CD4-positive, alpha-beta T cell (primary cell): ENCODE measurements at regions of chr1 and their contacts with region 1.

Region 1: DNA sequence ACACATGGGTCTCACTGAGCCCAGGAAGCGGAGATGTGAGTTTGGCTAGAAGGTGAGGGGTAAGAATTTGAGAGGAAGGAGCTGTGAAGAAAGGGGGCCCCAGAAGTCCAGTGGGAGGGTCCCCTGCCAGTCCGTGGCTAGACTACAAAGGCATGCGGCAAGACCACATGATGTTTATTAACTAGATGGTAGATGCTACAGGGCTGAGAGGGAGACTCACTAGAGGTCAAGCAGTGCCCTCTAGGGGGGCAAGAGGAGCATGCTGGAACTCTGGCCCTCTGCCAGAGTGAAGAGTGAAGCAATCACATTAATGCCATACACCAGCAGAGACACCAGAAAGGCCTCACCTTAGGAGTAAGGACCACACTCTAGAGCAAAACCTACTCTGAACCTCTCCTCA is 12.2 kb downstream of the KIAA0319L start:
- DNase-seq: peak in 13 of 14 experiments; percentile 30 to 85 (median 54)
- ATAC-seq: peak; percentile 81
- H3K4me3 ChIP-seq: no peak overlapping the region
- H3K4me3 Mint-ChIP-seq: no peak overlapping the region
- H3K27ac ChIP-seq: no peak overlapping the region
- H3K27ac Mint-ChIP-seq: peak overlapping the region; percentile 8
- H3K4me1 ChIP-seq: peaks cover 26% of the 10 kb centered on the region
- H3K4me1 Mint-ChIP-seq: peaks cover 67% of the 10 kb centered on the region
- H3K27me3 ChIP-seq: no peaks in the 10 kb centered on the region
- H3K27me3 Mint-ChIP-seq: no peaks in the 10 kb centered on the region
- CTCF ChIP-seq: peak; percentile 63

Region 2: DNA sequence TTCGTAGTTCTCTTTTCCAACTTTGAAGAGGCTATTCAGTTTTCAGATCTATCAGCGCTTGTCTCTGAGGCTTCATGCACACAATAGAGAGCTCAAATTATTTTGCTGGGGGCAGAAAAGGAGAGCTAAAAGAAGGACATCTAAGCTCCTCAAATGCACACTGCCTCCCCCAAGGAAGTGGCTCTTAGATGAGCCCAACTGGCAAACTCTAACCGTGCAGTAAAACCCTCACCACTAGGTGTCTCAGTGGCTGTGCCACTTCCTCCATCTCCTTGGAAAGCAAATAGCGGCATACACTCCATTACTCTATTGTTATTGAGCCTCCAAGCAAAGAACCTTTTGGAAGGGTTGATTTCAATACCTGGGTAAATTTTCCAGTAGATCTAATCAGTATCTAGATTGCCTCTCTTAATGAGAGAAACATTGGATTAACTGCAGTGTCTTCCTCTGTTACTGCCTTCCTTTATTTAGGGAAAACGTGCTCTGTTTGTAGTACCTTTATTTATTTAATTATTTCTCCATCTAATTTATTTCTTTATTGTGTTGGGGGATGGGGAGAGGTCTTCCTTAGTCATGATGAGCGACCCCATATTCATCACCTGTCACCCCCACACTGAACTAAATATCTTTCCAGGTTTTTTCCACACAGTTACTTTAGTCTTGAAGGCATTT is 342.8 kb before region 1 on chr1:
- CTCF ChIA-PET with region 1: no interaction called
- POLR2A ChIA-PET with region 1: no interaction called
- intact Hi-C with region 1: loop called in 1 of 2 experiments (anchors 5 kb)
- DNase-seq: peak; percentile 49 to 87 (median 62)
- ATAC-seq: peak; percentile 100
- H3K4me3 ChIP-seq: no peak overlapping the region
- H3K4me3 Mint-ChIP-seq: no peak overlapping the region
- H3K27ac ChIP-seq: no peak overlapping the region
- H3K27ac Mint-ChIP-seq: no peak overlapping the region
- H3K4me1 ChIP-seq: no peaks in the 10 kb centered on the region
- H3K4me1 Mint-ChIP-seq: peaks cover 9% of the 10 kb centered on the region
- H3K27me3 ChIP-seq: no peaks in the 10 kb centered on the region
- H3K27me3 Mint-ChIP-seq: no peaks in the 10 kb centered on the region
- CTCF ChIP-seq: peak; percentile 88

Region 3: DNA sequence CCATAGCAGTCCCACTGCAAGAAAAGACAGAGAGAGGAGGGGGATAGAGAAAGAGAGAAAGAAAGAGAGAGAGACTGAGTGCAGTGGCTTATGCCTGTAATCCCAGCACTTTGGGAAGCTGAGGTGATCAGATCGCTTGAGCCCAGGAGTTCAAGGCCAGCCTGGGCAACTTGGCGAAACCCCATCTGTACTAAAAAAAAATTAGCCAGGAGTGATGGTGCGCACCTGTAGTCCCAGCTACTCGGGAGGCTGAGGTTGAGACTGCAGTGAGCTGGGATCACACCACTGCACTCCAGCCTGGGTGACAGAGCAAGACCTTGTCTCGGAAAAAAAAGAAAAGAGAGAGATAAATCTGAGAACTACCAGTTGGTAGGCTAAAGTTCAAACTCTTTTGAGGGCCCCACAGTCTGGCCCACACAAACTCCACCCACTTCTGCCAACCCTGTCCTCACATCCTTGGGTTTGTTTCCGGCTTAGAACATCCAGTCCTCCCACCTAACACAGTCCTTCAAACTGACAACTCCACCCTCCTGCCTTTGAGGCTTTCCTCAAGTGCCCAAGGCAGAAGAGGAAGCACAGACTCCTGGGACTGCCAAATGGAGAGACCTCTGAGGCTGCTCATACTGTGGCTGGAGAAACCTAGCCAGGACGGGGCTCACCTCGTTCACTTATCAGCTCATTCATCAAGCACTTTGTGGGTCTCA is 48.2 kb after region 1 on chr1:
- CTCF ChIA-PET with region 1: no interaction called
- POLR2A ChIA-PET with region 1: no interaction called
- intact Hi-C with region 1: no loop called
- DNase-seq: no peak
- ATAC-seq: no peak
- H3K4me3 ChIP-seq: no peak overlapping the region
- H3K4me3 Mint-ChIP-seq: no peak overlapping the region
- H3K27ac ChIP-seq: no peak overlapping the region
- H3K27ac Mint-ChIP-seq: no peak overlapping the region
- H3K4me1 ChIP-seq: peaks cover 13% of the 10 kb centered on the region
- H3K4me1 Mint-ChIP-seq: peaks cover 15% of the 10 kb centered on the region
- H3K27me3 ChIP-seq: no peaks in the 10 kb centered on the region
- H3K27me3 Mint-ChIP-seq: no peaks in the 10 kb centered on the region
- CTCF ChIP-seq: no peak

Region 4: DNA sequence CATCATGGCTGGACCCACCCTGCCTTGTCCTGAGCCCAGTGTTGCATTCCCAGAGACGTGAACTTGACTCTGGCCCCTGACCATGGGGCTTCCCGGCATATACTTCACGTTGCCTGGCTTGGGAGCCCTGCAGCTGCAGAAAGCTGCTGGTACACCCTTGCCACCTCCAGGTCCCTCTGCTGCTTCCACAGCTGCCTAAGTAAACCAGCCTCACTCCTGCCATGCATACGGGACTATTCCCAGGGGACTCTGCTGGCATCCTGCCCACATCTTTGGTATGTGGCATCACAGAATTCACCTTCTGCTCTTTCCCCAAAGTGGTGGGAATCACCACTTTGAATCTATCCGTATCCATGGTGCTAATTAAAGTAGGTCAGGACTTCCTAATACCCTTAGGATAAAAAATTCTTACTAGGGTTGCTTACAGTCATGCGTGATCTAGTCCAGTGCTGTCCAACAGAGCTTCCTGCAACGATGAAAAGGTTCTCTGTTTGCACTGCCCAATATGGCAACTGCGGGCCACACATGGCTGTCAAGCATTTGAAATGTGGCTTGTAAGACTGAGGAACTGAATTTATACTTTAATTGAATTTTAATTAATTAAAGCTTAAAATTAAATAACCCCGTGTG is 1286.3 kb after region 1 on chr1:
- CTCF ChIA-PET with region 1: no interaction called
- POLR2A ChIA-PET with region 1: no interaction called
- intact Hi-C with region 1: no loop called
- DNase-seq: no peak
- ATAC-seq: no peak
- H3K4me3 ChIP-seq: no peak overlapping the region
- H3K4me3 Mint-ChIP-seq: no peak overlapping the region
- H3K27ac ChIP-seq: no peak overlapping the region
- H3K27ac Mint-ChIP-seq: no peak overlapping the region
- H3K4me1 ChIP-seq: no peaks in the 10 kb centered on the region
- H3K4me1 Mint-ChIP-seq: no peaks in the 10 kb centered on the region
- H3K27me3 ChIP-seq: peaks cover 0 to 6% of the 10 kb centered on the region in 2 experiments
- H3K27me3 Mint-ChIP-seq: peaks cover 27% of the 10 kb centered on the region
- CTCF ChIP-seq: no peak